ENCODE measurements at regions of chr9 and their contacts with region 1.

Region 1: DNA sequence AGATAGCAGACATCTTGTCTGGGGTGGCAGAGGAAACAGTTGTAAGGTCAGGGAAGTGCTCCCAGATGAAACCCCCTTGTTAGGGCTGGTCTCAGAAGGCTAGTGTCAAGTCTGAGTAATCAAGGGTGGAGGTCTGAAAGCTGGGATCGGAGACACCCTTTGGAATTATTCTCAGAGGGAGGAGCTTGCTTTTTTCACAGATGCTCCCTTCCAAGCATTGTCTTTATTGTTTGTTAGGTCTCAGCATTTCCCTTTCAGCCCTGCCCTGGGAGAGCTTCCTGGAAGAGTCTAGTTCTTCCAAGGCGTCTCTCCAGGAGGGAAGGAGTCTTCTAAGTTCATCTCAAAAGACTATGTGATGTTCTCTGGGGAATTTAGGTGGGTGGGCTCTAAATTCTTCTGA is 3.2 kb downstream of the TEK start:
- DNase-seq: no peak
- ATAC-seq: no peak
- H3K4me3 Mint-ChIP-seq: no peak overlapping the region
- H3K27ac Mint-ChIP-seq: no peak overlapping the region
- H3K4me1 Mint-ChIP-seq: no peaks in the 10 kb centered on the region
- H3K27me3 Mint-ChIP-seq: no peaks in the 10 kb centered on the region
- CTCF ChIP-seq: no peak

Region 2: DNA sequence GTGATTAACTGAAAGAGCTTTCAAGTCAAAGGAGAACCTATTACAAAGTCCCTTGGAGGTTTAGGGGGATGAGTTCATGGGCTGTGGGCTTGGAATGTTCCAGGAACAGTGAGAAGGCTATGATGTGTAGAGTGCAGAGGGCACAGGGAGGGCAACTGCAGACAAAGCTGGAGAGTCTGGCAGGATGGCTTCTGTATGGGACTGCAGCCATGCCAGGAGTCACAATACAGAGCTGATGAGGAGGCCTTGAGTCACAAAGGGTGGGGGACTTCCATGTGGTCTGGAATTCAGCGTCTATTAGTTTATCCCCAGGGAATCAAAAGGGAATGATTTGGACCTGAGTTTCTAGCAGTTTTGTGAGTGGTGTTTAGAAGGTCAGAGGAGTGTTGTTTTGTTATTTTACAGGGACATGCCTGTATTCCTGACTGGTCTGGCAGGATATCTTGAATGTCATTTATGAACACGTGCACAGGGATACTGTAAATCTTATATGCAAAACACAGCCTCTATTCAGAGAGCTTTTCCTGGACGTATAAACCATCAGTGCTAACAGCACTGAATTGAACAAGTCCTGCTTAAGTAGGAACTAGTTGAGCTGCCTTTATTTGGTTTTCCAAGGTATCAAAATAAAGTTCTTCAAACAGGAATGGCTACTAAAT is 17.5 kb before region 1 on chr9:
- CTCF ChIA-PET with region 1: no interaction called
- POLR2A ChIA-PET with region 1: no interaction called
- intact Hi-C with region 1: no loop called
- DNase-seq: no peak
- ATAC-seq: no peak
- H3K4me3 Mint-ChIP-seq: no peak overlapping the region
- H3K27ac Mint-ChIP-seq: no peak overlapping the region
- H3K4me1 Mint-ChIP-seq: peaks cover 2% of the 10 kb centered on the region
- H3K27me3 Mint-ChIP-seq: peaks cover 20% of the 10 kb centered on the region
- CTCF ChIP-seq: no peak

Region 3: GRCh38 chr9:27131731-27132130 is 19.5 kb after region 1 on chr9:
- CTCF ChIA-PET with region 1: no interaction called
- POLR2A ChIA-PET with region 1: no interaction called
- intact Hi-C with region 1: loop called (anchors 2 kb)
- DNase-seq: no peak
- ATAC-seq: no peak
- H3K4me3 Mint-ChIP-seq: no peak overlapping the region
- H3K27ac Mint-ChIP-seq: no peak overlapping the region
- H3K4me1 Mint-ChIP-seq: no peaks in the 10 kb centered on the region
- H3K27me3 Mint-ChIP-seq: peaks cover 2% of the 10 kb centered on the region
- CTCF ChIP-seq: no peak

Region 4: GRCh38 chr9:27151693-27152402 is 39.6 kb after region 1 on chr9:
- CTCF ChIA-PET with region 1: no interaction called
- POLR2A ChIA-PET with region 1: no interaction called
- intact Hi-C with region 1: no loop called
- DNase-seq: no peak
- ATAC-seq: no peak
- H3K4me3 Mint-ChIP-seq: no peak overlapping the region
- H3K27ac Mint-ChIP-seq: no peak overlapping the region
- H3K4me1 Mint-ChIP-seq: no peaks in the 10 kb centered on the region
- H3K27me3 Mint-ChIP-seq: no peaks in the 10 kb centered on the region
- CTCF ChIP-seq: no peak

Measured in activated CD8-positive, alpha-beta T cell treated with anti-CD3 and anti-CD28 coated beads for 36 hours (primary cell).